ENCODE measurements at regions of chr7 and their contacts with region 1.

Region 1: DNA sequence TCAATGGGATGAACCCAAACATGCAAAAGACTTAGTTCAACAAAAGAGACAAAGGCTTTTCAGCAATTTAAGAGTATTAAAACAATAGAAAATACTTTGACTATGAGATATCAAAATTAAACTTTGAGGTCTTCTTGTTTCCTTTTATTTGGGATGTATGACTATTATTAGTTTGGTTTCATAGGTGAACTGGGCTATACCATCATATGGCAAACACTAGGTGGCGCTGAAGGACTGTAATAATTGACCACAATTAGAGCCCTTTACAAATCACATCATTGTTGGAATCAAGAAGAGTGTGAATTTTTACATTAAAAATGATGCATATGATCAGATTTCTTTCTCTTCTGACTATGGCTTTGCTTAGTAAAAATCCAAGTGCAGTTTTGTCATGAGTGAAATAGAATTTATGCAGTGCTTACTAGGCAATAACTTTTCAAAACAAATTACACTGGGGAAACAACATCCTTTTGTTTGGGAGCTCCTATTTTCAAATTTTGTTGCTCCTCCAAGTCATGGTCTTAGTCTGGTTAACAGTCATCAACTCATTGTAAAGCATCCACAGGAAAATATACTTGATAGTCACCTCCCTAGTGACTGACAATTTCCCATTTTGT is 14.7 kb upstream of the NXPH1 start:
- ATAC-seq: peak; percentile 60 to 85 (median 77)
- H3K4me3 ChIP-seq: no peak overlapping the region
- H3K27ac ChIP-seq: no peak overlapping the region
- H3K4me1 ChIP-seq: peaks cover 0 to 4% of the 10 kb centered on the region in 2 donors

Region 2: GRCh38 chr7:7884855-7885254 is 533.9 kb before region 1 on chr7:
- in situ Hi-C with region 1: no loop called
- ATAC-seq: no peak
- H3K4me3 ChIP-seq: no peak overlapping the region
- H3K27ac ChIP-seq: no peak overlapping the region
- H3K4me1 ChIP-seq: no peaks in the 10 kb centered on the region

Region 3: GRCh38 chr7:10412422-10413019 is 1993.8 kb after region 1 on chr7:
- in situ Hi-C with region 1: loop called in 2 of 9 experiments (anchors 25 kb)
- ATAC-seq: peak in 4 of 8 experiments; percentile 26 to 71 (median 40)
- H3K4me3 ChIP-seq: no peak overlapping the region
- H3K27ac ChIP-seq: no peak overlapping the region
- H3K4me1 ChIP-seq: no peaks in the 10 kb centered on the region

Measured in motor neuron (in vitro differentiated cells).